BJ (cell line): ENCODE measurements at regions of chr15 and their contacts with region 1.

Region 1: DNA sequence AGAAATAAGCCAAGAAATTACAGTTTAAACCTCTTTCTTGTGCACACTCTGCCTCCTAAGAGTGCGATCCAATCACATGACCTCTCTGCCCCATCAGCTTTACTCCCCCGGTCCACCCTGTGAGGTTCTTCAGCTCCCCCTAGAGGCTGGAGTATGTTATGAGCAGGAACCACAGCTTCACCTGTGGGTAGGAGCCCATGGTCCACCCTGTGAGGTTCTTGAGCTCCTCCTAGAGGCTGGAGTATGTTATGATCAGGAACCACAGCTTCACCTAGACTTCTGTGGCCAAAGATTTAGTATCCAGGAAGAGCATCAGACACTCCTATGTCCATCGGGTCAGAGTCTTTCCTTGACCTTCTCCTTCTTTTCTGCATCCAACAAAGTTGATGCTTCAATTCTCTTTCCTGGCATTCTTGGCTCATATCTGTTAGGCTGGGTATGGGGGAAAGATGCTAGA is 163.9 kb downstream of the MINAR1 start:
- DNase-seq: peak; percentile 8
- H3K4me3 ChIP-seq: no peak overlapping the region
- H3K27me3 ChIP-seq: peaks cover 1% of the 10 kb centered on the region
- CTCF ChIP-seq: peak; percentile 82

Region 2: DNA sequence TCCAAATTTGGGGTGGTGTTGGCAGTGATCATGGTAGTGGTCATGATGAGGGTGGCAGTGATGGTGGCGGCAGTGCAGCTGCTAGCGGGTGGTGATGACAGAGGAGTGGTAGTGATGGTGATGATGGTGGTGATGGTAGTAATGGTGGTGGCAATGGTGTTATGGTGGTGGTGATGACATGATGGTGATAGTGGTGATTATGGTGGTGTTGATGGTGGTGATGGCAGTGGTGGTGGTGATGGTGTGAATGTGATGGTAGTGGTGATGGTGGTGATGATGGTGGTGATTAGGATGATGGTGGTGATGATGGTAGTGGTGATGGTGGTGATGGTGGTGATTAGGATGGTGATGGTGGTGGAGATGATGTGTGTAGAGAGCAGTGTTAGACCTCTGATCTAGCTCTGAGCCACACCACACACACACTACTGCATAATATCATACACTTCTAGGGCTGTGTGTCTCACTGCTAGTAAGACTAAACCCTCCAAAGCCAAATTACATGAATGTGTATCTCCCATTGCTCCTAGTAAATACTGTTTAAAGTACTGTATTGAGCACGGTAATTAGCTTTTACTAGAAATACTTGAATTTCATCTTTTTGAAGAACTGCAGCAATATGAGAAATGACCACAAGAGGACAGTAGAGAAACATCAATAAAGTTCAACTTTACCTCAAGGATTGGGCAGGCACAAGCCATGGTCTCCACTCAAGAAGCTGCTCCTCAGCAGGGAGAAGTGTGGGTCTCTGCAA is 256.3 kb before region 1 on chr15:
- CTCF ChIA-PET with region 1: interaction called, 17 read pairs
- POLR2A ChIA-PET with region 1: no interaction called
- DNase-seq: peak; percentile 16
- H3K4me3 ChIP-seq: no peak overlapping the region
- H3K27me3 ChIP-seq: no peaks in the 10 kb centered on the region
- CTCF ChIP-seq: peak; percentile 91

Region 3: GRCh38 chr15:79582650-79583049 is 13.4 kb before region 1 on chr15:
- CTCF ChIA-PET with region 1: interaction called, 17 read pairs
- POLR2A ChIA-PET with region 1: no interaction called
- DNase-seq: no peak
- H3K4me3 ChIP-seq: no peak overlapping the region
- H3K27me3 ChIP-seq: no peaks in the 10 kb centered on the region
- CTCF ChIP-seq: no peak

Region 4: GRCh38 chr15:79623490-79623889 is 27.4 kb after region 1 on chr15:
- CTCF ChIA-PET with region 1: interaction called, 11 read pairs
- POLR2A ChIA-PET with region 1: no interaction called
- DNase-seq: no peak
- H3K4me3 ChIP-seq: no peak overlapping the region
- H3K27me3 ChIP-seq: no peaks in the 10 kb centered on the region
- CTCF ChIP-seq: no peak